Psoas muscle (tissue), 8 donors: ENCODE measurements at regions of chr12 and their contacts with region 1.

Region 1: DNA sequence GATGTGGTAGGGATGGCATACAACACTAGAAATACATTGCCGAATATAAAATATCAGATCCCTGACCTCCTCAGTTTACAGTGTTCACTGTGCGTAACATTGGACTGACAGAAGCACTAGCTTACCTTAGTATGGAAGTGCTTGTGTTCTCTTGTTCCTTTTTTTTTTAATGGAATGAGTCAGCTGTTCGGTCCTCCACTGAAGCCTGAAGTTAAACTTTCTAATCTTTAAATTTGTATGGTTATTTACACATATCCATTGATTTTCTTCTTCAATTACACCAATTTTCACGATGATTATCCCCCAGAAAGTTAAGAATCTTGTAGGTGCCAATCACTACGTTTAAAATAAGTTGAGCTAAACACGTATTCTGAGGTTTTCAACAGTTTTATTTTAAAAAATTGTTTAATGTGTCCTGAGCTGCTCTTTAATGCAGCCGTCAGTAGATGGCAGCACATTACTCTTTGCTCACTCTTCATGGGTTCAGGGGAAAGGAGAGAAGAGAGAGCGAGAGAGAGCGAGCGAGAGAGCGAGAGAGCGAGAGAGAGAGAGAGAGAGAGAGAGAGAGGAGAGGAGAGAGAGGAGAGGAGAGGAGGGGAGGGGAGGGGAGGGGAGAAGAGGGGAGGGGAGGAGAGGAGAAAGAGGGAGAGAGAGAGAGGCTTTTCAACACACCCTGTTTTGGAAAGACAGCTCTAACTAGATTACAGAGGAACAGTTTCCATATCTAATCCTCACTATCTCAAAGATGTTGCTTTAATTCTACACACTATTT is 134.7 kb upstream of the SCAF11 start:
- DNase-seq: no peak
- ATAC-seq: peak; percentile 89 to 99 (median 94)
- H3K4me3 ChIP-seq: peak overlapping the region; percentile 44
- H3K27ac ChIP-seq: no peak overlapping the region
- H3K4me1 ChIP-seq: no peaks in the 10 kb centered on the region
- H3K27me3 ChIP-seq: no peaks in the 10 kb centered on the region
- CTCF ChIP-seq: peak; percentile 55

Region 2: DNA sequence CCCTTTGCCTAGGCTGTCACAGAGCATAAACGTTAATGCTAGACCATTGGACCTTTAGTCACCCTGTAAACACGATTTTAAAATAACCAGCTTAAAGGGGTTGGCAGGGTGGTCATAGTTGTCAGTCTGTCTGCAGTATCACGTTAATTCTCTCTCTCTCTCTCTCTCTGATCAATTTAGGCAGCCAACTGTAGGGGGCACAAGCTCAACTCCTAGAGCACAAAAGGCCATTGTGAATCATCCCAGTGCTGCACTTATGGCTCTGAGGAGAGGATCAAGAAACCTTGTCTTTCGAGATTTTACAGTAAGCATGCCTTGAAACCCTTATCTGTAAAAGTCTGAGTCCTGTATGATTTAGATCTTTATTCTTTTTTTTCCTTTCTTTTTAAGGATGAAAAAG is 231.8 kb before region 1 on chr12:
- intact Hi-C with region 1: no loop called
- DNase-seq: no peak
- ATAC-seq: no peak
- H3K4me3 ChIP-seq: no peak overlapping the region
- H3K27ac ChIP-seq: no peak overlapping the region
- H3K4me1 ChIP-seq: no peaks in the 10 kb centered on the region
- H3K27me3 ChIP-seq: no peaks in the 10 kb centered on the region
- CTCF ChIP-seq: no peak

Region 3: DNA sequence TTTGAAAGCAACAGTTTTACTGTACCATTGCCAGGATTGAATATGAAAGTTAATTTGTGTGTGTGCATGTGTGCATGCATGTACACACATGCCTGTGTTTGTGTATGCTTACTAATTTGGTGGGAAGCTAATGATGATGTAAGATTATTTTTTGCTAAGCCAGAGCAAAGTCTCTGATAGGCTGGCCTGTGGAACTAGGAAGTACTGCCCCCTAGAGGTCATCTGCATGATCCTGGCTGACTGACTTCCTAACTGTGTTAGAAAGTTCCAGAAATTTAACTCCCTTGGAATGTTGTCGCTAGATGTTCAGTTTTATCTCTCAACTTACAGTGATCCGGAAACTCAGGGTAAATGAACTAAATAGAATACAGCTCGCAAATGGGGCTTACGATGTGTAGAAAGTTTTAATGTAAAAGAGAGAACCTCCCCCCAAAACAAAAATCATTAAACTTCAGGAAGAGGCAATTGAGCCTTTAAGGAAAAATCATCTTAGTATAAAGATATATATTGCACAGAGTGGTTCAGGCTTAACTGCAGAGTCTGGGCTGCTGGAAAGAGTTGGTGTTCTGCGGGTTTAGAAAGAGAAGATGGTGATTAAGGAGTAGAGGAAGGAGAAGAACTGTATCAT is 178.1 kb after region 1 on chr12:
- intact Hi-C with region 1: loop called in 1 of 2 experiments (anchors 10 kb)
- DNase-seq: no peak
- ATAC-seq: peak in 3 of 4 donors; percentile 35 to 72 (median 66)
- H3K4me3 ChIP-seq: no peak overlapping the region
- H3K27ac ChIP-seq: no peak overlapping the region
- H3K4me1 ChIP-seq: no peaks in the 10 kb centered on the region
- H3K27me3 ChIP-seq: no peaks in the 10 kb centered on the region
- CTCF ChIP-seq: peak; percentile 52

Region 4: DNA sequence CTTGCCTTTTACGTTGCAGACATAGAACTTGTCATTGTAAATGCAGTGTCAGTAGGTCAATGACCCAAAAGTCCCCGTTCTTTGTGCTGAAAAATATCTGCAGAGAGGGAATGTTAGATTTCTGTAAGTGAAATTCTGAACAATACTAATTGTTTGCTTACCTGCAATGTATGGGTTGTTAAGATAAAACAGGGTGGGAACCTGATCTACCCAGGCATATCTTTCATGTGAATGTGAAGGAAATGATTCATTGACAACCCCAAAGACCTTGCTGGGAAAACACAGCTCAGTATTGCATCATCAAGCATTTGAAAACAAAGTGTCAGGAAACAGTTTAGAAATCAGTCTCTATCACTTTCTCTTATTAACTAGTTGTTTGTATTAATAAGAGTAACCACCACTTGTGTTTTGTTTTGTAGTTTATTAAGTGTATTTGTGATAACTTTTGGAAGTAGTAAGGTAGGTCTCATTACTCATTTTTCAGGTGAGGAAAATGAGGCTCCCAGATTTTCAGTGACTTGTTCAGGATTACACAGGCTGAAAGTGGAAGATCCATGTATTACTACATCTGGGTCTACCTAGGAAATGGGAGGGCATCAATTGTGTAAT is 305.4 kb after region 1 on chr12:
- intact Hi-C with region 1: no loop called
- DNase-seq: no peak
- ATAC-seq: peak; percentile 83 to 91 (median 88)
- H3K4me3 ChIP-seq: no peak overlapping the region
- H3K27ac ChIP-seq: peak overlapping the region; percentile 68
- H3K4me1 ChIP-seq: peaks cover 26% of the 10 kb centered on the region
- H3K27me3 ChIP-seq: no peaks in the 10 kb centered on the region
- CTCF ChIP-seq: no peak

Region 5: DNA sequence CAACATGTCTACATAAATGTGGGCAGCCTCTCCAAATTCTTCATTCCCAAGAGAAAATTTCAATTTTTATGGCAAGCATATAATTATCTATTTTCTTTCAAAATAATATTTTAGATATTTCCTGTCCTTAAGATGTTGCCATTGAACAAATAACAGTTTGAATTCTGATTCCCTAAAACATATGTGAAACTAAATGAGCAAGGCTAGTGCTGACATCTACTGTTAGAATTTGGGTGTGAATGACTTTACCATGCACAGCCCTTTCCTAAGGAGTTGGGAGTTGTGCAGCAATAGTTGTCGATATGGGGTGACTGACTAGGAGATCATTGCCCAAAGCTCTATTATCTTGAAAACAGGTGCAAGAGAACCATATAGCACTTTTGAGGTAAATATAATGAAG is 808.9 kb after region 1 on chr12:
- intact Hi-C with region 1: loop called in 1 of 2 experiments (anchors 10 kb)
- DNase-seq: no peak
- ATAC-seq: peak; percentile 74 to 95 (median 84)
- H3K4me3 ChIP-seq: no peak overlapping the region
- H3K27ac ChIP-seq: no peak overlapping the region
- H3K4me1 ChIP-seq: peaks cover 4% of the 10 kb centered on the region
- H3K27me3 ChIP-seq: no peaks in the 10 kb centered on the region
- CTCF ChIP-seq: peak; percentile 68

Region 6: DNA sequence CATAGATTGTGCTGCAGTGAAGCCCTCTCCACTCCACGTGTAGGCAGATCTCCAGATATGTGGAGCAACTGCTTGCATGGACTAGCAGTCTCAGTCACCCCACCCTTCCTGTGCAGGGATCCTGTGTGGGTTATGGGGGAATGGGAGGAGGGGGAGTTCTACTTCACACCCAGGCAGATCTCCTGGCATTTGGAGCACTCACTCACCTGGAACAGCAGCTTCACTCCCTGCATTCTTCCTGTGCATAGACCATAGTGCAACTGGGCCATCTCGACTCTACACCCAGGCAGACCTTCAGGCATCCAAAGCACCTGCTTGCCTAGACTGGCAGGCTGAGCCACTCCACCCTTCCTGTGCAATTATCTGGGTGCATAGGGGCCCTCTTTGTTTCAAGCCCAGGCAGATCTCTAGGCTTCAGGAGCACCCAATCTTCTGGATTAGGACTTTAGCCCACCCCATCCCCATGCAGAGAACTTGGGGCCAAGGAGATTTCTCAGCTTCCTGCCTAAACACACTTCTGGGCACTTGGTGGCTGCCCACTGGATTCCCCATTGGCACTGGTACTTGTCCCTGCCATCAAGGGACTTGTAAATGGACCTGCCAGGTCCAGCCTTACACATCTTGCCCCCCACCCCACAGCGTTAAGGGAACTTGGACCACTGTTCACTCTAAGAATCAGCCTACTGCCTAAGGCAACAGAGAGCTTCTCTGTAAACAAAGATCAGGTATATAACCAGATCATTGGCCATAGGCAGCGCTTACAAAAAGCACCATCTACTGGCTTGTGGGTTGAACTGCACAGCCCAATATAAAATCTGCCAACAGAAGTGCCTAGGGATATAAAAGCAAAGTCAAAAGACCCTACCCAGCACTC is 858.6 kb after region 1 on chr12:
- intact Hi-C with region 1: loop called in 1 of 2 experiments (anchors 10 kb)
- DNase-seq: no peak
- ATAC-seq: peak; percentile 81 to 95 (median 87)
- H3K4me3 ChIP-seq: no peak overlapping the region
- H3K27ac ChIP-seq: no peak overlapping the region
- H3K4me1 ChIP-seq: no peaks in the 10 kb centered on the region
- H3K27me3 ChIP-seq: no peaks in the 10 kb centered on the region
- CTCF ChIP-seq: peak; percentile 80

Region 7: DNA sequence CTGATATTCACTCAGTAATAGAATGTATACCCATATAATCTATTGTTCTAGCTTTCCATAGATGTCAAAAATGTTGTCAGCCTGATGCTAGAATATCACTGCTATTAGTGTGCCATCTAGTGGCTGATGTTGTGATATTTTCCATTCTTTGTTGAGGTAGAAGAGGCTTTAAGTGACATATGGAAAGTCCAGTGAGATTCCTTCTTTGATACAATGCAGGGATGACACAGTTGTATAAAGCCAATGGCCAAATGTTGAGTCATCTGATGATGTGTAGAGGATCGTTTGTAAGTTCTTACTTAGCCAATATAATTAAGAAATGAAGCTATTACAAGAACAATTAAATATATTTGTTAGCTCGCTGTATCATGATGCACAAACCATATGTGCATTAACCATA is 896.3 kb after region 1 on chr12:
- intact Hi-C with region 1: loop called in 1 of 2 experiments (anchors 5 kb)
- DNase-seq: no peak
- ATAC-seq: peak in 3 of 4 donors; percentile 49 to 66 (median 55)
- H3K4me3 ChIP-seq: no peak overlapping the region
- H3K27ac ChIP-seq: no peak overlapping the region
- H3K4me1 ChIP-seq: peaks cover 3% of the 10 kb centered on the region
- H3K27me3 ChIP-seq: no peaks in the 10 kb centered on the region
- CTCF ChIP-seq: peak; percentile 73